Posterior vena cava (tissue), 2 donors: ENCODE measurements at regions of chr7 and their contacts with region 1.

Region 1: DNA sequence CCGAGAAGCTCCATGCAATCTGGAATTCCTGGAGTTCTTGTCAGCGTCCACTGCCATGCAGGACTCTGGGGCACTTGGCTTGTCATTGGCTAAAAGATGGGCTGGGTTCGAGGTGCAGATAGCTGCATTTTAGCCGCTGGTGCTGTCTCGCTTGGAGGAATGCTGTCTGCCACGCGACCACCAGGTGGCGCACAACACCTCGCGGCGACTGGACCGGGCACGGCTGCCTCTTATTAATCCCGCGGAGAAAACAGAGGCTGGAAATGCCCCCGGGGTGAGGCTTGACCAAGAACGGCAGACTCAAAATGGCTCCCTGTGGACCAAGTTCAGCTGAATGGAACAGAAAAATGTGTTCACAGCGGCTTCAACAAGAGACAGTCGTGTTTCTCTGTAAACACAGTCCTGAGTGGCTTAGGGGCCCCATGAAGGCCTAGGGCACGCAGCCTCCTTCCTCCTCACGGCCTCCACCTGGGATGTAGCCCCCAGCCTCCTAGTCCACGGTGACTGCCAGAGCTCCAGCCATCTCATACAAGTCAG is 46.2 kb downstream of the AOC1 start:
- DNase-seq: peak; percentile 93

Region 2: DNA sequence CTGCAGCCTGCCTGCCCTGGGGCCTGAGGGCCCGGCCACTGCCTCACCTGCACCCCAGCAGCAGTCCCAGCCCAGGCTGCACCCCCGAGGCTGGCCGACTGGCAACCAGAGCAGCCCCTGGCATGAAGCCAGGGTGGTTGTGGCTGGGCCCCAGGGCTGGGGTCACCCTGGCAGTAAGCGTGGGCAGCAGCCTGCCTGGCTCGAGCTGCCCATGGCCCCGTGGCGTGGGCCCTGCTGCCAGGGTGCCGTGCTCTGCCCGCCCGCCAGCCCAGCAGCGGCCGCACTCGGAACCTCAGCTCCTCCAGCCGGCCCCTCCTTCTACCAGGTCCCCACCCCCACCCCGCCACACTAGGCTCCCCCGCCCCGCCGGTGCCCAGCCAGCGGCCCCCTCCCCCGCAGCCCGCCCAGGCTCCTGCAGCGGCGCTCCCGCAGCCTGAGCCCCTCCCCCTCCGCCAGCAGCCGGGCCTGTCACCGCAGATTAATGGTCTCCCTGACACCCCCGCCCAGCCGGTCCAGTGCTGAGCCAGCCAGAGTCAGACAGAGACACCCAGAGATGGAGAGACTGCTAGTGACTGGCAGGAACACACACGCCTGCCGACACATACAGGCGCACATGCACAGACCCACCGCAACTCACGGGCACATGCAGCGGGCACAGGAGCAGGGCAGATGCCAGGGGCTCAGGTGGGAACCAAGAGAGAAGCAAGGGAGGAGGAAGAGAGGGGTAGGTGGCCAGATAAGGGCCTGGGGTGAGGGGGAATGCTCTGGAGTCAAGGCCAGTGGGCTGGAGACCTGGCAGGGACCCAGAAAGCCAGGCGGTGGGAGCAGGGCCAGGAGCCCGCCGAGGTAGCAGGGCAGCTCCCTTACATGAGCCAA is 57.2 kb after region 1 on chr7:
- intact Hi-C with region 1: loop called in 1 of 2 experiments (anchors 5 kb)
- DNase-seq: no peak

Region 3: GRCh38 chr7:150988230-150989226 is 90.0 kb after region 1 on chr7:
- intact Hi-C with region 1: loop called (anchors 2 kb)
- DNase-seq: peak; percentile 89